Activated B cell treated with CpG ODN at 0.5 μM for 24 hours (primary cell): ENCODE measurements at regions of chr19 and their contacts with region 1.

Region 1: DNA sequence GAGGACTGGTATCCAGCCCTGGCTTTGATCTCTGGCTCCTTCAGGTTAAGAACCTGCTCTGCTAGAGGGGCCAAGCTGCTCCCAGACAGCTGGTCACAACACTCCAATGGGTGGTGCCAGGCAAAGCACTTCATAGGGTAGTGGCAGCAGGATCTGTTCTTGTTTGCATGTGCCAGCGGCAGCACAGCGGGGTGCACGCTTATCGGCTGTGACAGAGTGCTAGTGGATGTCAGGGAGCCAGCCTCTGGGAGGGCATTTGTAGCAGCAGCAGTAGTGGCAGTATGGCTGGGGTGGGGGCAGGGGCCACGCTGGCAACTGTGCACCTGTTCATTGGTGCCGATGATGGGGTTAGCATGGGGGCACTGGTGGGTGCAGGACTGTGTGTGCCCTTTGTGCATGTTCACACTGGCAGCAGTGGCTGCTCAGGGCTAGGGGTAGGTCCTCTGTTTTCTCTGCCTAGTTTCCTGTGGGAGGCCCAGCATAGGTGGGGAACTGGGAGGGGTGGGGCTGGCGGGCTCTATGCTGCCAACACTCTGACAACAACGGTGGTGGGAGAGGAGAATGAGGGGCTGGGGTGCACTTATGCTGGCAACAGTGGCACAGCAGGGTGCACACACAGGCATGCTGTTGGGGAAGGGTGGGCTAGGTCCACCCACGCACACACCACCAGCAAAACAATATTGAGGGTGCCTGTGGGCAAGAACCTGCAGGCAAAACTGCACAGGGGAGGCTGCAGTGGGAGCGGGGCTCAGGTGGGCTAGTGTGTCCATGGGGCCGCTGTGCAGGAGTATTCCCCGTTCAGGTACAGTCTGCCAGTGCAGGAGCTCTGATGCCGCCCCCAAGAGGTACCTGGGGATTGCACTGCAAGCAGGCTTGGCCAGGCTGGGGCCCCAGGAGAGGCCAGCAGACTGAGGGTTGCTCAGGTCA is 19.3 kb downstream of the AP1M1 start:
- DNase-seq: no peak
- ATAC-seq: no peak
- H3K4me3 Mint-ChIP-seq: no peak overlapping the region
- H3K27ac Mint-ChIP-seq: peak overlapping the region; percentile 62
- H3K4me1 Mint-ChIP-seq: peaks cover 34% of the 10 kb centered on the region
- H3K27me3 Mint-ChIP-seq: no peaks in the 10 kb centered on the region
- CTCF ChIP-seq: no peak

Region 2: DNA sequence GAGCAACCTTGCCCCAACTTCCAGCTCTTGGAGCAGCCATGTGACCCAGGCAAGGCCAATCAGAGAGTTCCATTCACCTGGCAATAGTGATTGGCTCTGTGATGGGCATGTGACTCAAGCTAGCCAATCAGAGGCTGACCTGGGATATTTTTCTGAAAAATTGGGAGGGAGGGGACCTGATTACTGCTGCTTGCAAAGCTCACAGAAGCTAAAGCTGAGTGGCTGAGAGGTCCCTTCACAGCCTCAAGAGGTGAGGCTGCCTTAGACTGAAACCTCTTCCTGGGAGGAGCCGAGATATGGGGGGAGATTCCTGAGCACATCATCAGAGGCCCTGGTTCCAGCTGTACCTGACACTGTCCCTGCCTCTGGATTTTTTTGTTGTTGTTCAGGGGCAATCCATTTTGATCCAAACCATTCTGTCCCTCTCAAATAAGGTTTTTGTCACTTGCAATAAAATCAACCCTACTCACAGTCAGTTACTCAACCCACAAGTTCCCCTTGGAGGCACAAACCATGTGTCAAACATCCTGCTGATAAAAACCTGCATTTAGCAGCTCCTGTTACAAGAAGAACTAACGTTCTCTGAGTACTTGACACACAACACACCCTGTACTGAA is 48.4 kb before region 1 on chr19:
- CTCF ChIA-PET with region 1: no interaction called
- POLR2A ChIA-PET with region 1: no interaction called
- intact Hi-C with region 1: no loop called
- DNase-seq: no peak
- ATAC-seq: peak; percentile 74
- H3K4me3 Mint-ChIP-seq: no peak overlapping the region
- H3K27ac Mint-ChIP-seq: peak overlapping the region; percentile 61
- H3K4me1 Mint-ChIP-seq: peaks cover 22% of the 10 kb centered on the region
- H3K27me3 Mint-ChIP-seq: no peaks in the 10 kb centered on the region
- CTCF ChIP-seq: no peak

Region 3: GRCh38 chr19:16203256-16204004 is 13.6 kb before region 1 on chr19:
- CTCF ChIA-PET with region 1: no interaction called
- POLR2A ChIA-PET with region 1: interaction called, 11 read pairs
- intact Hi-C with region 1: no loop called
- DNase-seq: no peak
- ATAC-seq: peak; percentile 23
- H3K4me3 Mint-ChIP-seq: no peak overlapping the region
- H3K27ac Mint-ChIP-seq: peak overlapping the region; percentile 76
- H3K4me1 Mint-ChIP-seq: peaks cover 39% of the 10 kb centered on the region
- H3K27me3 Mint-ChIP-seq: no peaks in the 10 kb centered on the region
- CTCF ChIP-seq: no peak